ENCODE measurements at regions of chr19 and their contacts with region 1.

Region 1: DNA sequence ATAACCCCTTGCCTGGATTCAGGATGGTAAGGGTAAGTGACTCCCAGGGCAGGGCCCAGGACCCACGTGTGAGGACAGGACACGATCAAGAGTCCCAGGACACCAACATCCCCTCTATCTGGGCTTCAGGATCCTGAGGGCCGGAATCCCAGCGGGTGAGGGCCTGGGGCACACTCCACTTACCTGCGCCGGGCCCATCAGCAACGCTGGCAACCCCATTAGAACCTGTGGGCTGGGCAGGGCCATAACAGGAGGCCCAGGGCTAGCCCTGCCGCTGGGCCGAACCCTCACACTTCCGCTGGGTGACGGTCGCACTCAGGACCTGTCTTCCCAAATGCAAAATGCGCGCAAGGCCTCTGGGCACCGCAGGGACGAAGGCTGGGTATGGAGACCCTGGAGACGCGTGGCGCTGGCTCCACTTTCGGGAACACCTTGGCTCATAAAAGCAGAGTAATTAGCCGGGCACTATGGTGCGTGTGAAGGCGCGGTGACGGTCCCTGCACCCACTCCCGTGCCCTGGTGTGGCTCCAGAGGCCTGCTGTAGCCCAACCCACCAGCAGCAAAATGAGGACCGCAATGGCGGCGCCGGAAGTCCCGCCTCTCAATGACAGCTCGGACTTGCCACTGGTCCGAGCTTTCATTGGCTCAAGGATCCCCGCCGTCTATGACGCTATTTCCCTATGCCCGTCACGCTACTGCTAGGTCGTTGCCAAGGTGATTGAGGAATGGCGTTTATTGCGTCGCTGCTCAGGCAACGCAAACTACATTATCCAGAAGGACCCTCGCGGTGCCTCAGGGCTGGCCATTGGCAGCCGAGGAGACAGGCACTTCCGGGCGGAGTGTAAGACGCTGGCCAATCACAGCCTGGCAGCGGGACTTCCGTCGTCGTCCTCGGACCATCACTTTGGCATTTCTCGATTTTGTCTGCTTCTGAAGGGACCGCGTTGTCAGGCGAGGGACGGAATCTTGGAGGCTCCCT is at the start of gene ZNF132:
- DNase-seq: peak; percentile 96
- ATAC-seq: peak; percentile 98
- H3K4me3 Mint-ChIP-seq: peak within 1 kb of the TSS; percentile 82
- H3K27ac Mint-ChIP-seq: peak within 1 kb of the TSS; percentile 95
- H3K4me1 Mint-ChIP-seq: peaks cover 29% of the 10 kb centered on the region
- H3K27me3 Mint-ChIP-seq: no peaks in the 10 kb centered on the region
- total RNA-seq, gene ZNF132: 3.3 to 4.4 TPM

Region 2: GRCh38 chr19:57578487-57579205 is 861.2 kb before region 1 on chr19 and contains the start of gene ZNF416:
- CTCF ChIA-PET with region 1: no interaction called
- POLR2A ChIA-PET with region 1: no interaction called
- intact Hi-C with region 1: loop called in 1 of 2 experiments (anchors 1 kb)
- DNase-seq: peak; percentile 97
- ATAC-seq: peak; percentile 96
- H3K4me3 Mint-ChIP-seq: peak within 1 kb of the TSS; percentile 77
- H3K27ac Mint-ChIP-seq: peak within 1 kb of the TSS; percentile 77
- H3K4me1 Mint-ChIP-seq: peaks cover 23% of the 10 kb centered on the region
- H3K27me3 Mint-ChIP-seq: no peaks in the 10 kb centered on the region
- total RNA-seq, gene ZNF416: 3.3 to 3.7 TPM

Region 3: GRCh38 chr19:58228585-58229254 is 211.1 kb before region 1 on chr19 and contains the start of gene ZNF544:
- CTCF ChIA-PET with region 1: no interaction called
- POLR2A ChIA-PET with region 1: no interaction called
- intact Hi-C with region 1: loop called in 1 of 2 experiments (anchors 5 kb)
- DNase-seq: peak; percentile 85
- ATAC-seq: peak; percentile 87
- H3K4me3 Mint-ChIP-seq: peak within 1 kb of the TSS; percentile 91
- H3K27ac Mint-ChIP-seq: peak within 1 kb of the TSS; percentile 95
- H3K4me1 Mint-ChIP-seq: peaks cover 24% of the 10 kb centered on the region
- H3K27me3 Mint-ChIP-seq: no peaks in the 10 kb centered on the region
- total RNA-seq, gene ZNF544: 32.2 to 38.5 TPM

Region 4: DNA sequence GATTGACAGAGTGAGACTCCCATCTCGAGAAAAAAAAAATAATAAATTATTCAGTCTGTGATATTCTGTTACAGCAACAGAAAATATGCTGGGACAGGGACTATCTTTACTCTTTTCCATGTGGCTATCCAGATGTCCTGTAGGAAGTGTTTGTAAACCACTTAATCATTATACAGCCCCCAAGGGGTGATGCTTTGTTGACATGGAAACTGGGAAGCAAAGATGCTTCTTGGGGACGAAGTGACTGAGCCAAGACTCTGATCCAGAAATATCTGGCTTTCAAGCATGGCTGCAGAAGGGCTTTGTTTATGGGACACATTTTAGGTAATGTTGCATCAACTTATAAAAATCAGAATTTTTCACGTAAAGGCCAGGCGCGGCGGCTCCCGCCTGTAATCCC is 155.7 kb before region 1 on chr19:
- CTCF ChIA-PET with region 1: no interaction called
- POLR2A ChIA-PET with region 1: no interaction called
- intact Hi-C with region 1: no loop called
- DNase-seq: no peak
- ATAC-seq: no peak
- H3K4me3 Mint-ChIP-seq: no peak overlapping the region
- H3K27ac Mint-ChIP-seq: no peak overlapping the region
- H3K4me1 Mint-ChIP-seq: peaks cover 26% of the 10 kb centered on the region
- H3K27me3 Mint-ChIP-seq: no peaks in the 10 kb centered on the region

Region 5: GRCh38 chr19:58326914-58327726 is 112.7 kb before region 1 on chr19 and contains the start of gene ZSCAN22:
- CTCF ChIA-PET with region 1: no interaction called
- POLR2A ChIA-PET with region 1: no interaction called
- intact Hi-C with region 1: loop called in 1 of 2 experiments (anchors 1 kb)
- DNase-seq: peak; percentile 96
- ATAC-seq: peak; percentile 91
- H3K4me3 Mint-ChIP-seq: no peak within 1 kb of the TSS
- H3K27ac Mint-ChIP-seq: no peak within 1 kb of the TSS
- H3K4me1 Mint-ChIP-seq: peaks cover 4% of the 10 kb centered on the region
- H3K27me3 Mint-ChIP-seq: no peaks in the 10 kb centered on the region
- total RNA-seq, gene ZSCAN22: 3.1 to 3.8 TPM

Region 6: DNA sequence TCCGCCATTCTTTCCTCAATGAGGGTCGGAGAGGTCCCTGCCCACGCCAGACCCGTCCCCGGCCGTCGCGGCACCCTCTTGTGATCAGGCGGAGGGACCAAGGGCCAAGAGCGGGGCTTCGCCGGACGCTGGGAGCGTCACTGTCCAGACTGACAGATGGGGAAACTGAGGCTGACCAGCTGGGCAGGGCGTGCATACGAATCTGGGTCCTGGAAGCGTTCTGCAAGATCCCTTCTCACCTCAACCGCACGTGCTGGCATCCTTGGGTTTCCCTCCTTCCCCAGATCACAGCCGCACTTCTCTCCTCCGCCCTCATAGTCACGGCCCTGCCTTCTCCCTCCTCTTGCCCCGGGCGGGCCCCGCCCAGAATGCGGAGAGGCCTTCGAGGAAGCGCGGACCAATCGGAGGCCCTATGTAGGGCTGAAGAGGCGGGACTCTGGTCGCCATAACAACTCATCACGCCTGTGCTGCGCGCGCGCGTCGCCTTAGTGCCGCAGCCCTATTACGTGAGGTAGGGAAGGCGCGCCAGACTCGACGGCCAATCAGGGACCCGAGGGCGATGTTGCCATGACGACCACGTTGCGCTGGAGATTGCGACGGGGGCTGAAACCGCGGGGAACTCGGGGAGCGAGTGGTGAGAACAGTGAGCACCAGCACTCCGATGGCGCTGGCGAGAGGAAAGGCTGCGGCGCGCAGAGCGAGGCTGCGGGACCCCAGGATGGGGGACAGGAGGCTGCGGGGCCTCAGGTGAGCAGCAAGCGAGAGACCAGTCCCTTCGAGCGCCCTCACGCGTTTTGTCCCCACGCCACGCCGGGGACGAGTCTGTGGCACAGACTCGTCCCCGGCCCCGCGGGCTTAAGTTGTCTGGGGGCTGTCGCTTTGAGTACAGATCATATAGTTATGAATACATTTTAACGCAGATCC is 38.7 kb before region 1 on chr19:
- CTCF ChIA-PET with region 1: no interaction called
- POLR2A ChIA-PET with region 1: no interaction called
- intact Hi-C with region 1: loop called (anchors 1 kb)
- DNase-seq: peak; percentile 100
- ATAC-seq: peak; percentile 97
- H3K4me3 Mint-ChIP-seq: peak overlapping the region; percentile 82
- H3K27ac Mint-ChIP-seq: peak overlapping the region; percentile 61
- H3K4me1 Mint-ChIP-seq: peaks cover 14% of the 10 kb centered on the region
- H3K27me3 Mint-ChIP-seq: peaks cover 2% of the 10 kb centered on the region

Region 7: DNA sequence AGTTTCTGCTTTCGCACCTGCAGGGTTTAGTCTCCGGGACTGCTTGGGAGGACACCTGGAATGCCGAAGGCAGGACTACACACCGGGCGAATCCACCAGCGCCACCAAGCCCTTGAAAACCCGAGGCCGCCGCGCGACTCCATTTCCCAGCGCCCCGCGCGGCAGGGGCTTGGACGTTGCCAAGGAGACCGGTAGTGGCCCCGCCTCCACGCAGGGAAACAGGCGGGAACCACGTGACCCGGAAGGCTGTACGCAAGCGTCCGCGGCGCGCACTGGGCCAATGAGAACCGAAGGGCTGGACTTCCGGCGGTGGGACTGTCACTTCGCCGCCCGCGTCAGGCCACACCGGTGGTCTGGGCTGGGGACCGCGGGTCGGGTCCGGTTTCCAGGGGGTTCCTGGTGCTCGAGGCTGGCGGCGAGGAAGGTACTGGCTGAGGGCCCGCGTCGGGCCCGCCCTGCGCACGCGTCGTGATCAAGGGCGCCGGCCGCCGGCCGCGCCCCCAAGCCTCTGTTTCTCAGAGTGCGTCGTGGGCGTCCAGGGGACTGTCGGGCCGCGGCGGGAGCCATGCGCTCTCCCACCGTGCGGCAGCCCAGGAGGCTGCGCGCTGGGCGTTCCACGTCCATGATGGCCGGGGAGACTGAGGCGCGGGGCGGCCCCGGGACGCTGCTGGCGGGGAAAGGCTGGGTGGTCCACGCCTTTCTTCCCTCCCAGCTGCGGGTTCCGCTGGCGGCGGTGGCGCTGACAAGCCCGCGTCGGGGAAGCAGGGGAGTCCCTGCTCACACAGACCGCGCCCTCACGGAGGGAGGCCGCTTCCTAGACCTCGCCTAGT is 27.1 kb after region 1 on chr19 and contains the start of gene ZNF324:
- CTCF ChIA-PET with region 1: no interaction called
- POLR2A ChIA-PET with region 1: no interaction called
- intact Hi-C with region 1: loop called (anchors 1 kb)
- DNase-seq: peak; percentile 99
- ATAC-seq: peak; percentile 98
- H3K4me3 Mint-ChIP-seq: peak within 1 kb of the TSS; percentile 86
- H3K27ac Mint-ChIP-seq: peak within 1 kb of the TSS; percentile 47
- H3K4me1 Mint-ChIP-seq: peaks cover 22% of the 10 kb centered on the region
- H3K27me3 Mint-ChIP-seq: peaks cover 2% of the 10 kb centered on the region
- total RNA-seq, gene ZNF324: 4.7 to 7.5 TPM

Region 8: DNA sequence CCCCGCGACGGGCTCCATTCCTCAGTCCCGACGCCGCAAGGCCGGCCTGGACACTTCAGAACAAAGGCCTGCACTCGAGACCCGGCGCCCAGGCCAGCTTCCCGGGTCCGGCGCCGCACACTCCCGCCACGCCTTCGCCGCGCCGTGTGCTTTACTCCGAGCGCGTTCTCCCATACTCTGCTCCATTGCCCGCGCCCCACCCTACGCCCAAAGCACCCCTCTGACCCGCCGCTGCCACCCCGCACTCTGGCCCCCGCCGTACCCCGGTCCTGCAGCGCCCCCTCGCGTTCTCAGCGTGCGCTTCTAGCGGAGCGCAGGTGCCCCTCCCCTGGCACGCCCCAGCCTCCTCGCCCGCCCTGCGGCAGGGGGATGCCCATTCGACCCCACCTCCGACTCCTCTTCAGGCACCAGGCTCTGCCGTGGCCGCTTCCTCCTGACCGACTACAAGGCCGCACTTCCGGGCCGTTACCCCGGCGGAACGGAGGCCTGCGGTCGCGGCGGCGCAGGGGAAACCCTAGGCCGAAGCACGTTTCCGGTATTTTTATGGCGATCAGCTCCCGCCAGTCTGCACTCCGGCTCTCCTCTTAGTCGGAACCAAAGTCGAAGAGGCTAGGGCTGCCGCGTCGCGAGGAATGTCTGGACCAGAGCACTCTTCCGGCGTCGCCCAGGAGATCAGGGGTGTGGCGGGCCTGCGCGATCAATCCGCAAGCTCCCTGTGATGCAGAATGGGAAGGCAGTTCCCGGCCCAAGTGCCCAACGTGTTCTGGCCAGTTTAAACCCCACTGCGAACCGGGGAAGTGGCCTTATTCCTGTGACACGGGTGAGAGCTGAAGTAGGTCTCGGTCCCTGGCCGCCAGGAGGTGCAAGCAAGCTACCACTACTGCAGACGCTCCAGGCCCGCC is 79.7 kb after region 1 on chr19 and contains the start of gene ZBTB45:
- CTCF ChIA-PET with region 1: no interaction called
- POLR2A ChIA-PET with region 1: no interaction called
- intact Hi-C with region 1: loop called in 1 of 2 experiments (anchors 1 kb)
- DNase-seq: peak; percentile 96
- ATAC-seq: peak; percentile 82
- H3K4me3 Mint-ChIP-seq: peak within 1 kb of the TSS; percentile 82
- H3K27ac Mint-ChIP-seq: peak within 1 kb of the TSS; percentile 94
- H3K4me1 Mint-ChIP-seq: peaks cover 39% of the 10 kb centered on the region
- H3K27me3 Mint-ChIP-seq: no peaks in the 10 kb centered on the region
- total RNA-seq, gene ZBTB45: 10.1 to 11.1 TPM